ENCODE measurements at regions of chr10 and their contacts with region 1.

Region 1: DNA sequence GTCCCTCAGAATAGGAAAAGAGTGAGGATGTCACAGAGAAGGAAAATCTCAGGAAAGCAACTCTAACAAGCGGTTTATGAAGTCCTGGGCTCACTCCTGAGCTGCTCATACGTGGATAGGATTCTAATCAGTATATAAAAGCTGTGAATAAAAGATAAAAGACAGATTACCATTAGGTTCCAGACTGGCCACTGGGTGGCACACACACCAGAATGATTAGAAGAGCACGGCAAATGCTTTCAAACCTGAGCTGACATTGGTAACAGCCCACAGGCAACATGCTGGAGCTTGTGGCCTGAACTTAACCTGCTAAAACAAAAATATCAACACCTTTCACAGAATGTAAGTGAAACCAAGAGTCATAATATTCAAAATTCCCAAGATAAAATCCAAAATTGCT is 370.8 kb downstream of the GRID1 start:
- DNase-seq: no peak

Region 2: DNA sequence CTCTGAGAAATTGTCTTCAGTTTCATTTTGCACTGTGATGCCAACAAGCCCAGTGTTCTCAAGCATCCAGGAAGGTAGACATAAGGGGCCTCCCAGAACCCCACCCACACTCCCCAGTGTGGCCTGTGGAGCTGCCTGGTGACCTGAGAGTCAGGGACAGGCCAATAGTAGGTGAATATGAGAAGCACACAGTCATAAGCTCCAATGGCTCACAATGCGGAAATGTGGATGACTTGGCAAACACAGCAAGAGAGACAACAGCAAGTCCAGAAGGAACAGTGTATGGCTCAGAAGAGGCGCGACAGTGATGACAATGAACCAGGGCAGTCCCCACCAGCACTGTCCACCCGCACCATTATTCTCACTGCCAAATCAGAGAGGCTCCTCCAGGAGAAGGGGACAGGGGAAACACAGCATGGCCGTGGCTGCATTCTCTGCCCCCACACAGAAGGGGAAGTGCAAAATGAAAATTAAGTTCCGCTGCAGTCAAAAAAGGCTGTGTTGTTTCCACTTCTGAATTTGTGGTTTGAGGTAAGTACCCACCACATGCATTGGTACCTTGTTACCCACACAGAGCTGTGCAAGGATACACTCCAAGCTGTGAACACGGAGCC is 49.0 kb before region 1 on chr10:
- intact Hi-C with region 1: no loop called
- DNase-seq: no peak

Region 3: DNA sequence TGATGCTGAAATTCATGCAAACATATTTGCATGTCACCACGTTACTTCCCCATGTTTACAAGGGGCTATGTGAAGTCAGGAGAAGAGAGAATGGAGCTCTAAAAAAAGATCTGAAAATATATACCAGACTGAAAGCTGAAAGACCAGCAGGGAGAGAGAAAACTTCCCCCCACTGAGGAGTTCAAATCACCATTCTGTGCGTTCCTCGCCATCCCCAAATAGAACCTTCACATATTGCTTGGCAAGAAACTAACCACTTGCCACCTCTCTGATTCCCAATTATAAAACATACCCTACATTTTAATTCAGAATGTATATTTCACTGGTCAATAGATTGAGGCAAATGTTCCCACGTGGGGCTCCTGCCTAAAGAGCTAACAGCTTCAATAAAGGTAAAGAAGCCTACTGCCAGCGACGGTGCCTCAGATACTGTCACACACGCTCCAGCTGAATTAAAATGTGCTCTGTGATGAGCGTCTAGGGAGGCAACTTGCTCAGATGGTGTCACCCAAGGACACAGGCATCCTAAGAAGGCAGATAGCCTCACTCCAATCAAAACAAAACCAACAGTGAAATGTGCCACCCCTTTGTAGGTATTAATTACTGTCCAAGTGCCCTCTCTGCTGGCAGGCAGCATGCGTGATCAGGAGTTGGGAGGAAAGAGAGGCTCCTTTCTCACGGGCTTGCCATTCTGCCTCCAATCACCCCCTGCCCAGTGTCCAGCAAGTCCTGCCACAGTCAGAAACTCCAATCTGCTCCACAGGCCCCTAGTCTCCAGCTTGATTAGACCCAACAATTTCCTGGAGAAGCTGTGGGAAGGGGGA is 72.7 kb after region 1 on chr10:
- intact Hi-C with region 1: loop called (anchors 5 kb)
- DNase-seq: peak; percentile 49

Region 4: DNA sequence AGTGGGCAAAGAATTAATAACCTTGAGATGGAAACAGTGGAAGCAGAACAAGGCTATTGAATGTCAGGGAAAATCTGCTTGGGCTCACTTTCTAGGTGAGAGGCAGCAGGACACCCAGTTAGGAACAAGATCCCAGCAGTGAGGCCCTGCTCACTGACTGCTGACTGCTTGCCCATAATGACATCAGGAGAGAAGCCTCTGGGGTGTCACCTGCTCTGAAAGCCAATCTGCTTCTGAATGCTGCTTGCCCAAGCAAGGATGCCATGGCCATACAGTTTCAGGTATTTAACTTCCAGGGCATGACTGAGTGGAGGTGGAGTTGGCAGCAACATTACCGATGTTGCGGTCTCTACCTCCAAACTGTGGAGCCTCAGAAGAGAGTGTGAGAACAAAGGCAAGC is 537.5 kb after region 1 on chr10:
- intact Hi-C with region 1: no loop called
- DNase-seq: no peak